Caco-2 (cell line): ENCODE measurements at regions of chr1 and their contacts with region 1.

Region 1: DNA sequence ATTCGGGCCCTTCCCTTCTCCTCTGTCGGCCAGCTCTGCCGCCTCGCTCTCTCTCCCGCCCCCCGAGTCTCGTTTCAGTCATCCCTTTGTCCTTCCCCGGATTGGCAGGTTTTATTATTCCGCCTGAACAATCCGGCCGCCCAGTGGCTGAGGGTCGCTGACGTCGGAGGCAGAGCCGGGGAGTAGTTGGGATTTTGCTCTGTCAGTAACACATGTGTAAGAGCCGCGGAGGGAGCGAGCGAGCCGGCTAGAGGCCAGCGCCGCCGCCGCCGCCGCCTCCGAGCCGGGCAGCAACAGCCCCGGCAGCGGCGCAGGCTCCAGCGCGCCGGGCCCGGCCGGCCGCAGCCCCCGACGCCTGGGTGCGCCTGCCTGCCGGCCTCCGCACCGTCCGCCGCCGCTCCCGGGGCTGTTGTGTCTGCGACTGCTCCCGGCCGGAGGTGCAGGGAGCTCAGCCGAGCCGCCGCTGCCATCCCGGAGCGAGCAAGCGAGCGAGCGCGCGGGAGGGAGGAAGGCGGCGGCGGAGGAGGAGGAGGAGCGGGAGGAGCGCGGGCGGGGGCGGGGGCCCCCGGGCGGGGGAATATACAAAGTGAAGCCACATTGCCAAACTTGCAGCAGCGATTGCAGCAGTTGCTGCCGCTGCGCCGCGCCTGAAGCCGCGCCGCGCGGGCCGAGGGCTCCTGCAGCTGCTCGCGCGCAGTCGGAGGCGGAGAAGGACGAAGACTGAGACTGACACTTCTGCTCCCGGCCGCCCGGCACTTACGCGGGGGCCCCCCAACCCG is at the start of gene LMO4:
- DNase-seq: peak; percentile 92 to 95
- H3K4me3 ChIP-seq: peak within 1 kb of the TSS; percentile 62
- H3K4me3 Mint-ChIP-seq: peak within 1 kb of the TSS; percentile 94
- H3K27ac Mint-ChIP-seq: peak within 1 kb of the TSS; percentile 87
- H3K4me1 ChIP-seq: 0 out of 2 replicates have a peak, but pooled peaks cover 4% of the 10 kb centered on the region
- H3K4me1 Mint-ChIP-seq: no peaks in the 10 kb centered on the region
- H3K27me3 ChIP-seq: no peaks in the 10 kb centered on the region
- H3K27me3 Mint-ChIP-seq: no peaks in the 10 kb centered on the region
- CTCF ChIP-seq: no peak
- total RNA-seq, gene LMO4: 50.4 and 53.8 TPM in 2 replicates

Region 2: GRCh38 chr1:87279966-87280535 is 48.4 kb before region 1 on chr1:
- CTCF ChIA-PET with region 1: interaction called, 10 read pairs
- POLR2A ChIA-PET with region 1: no interaction called
- intact Hi-C with region 1: no loop called
- DNase-seq: no peak
- H3K4me3 ChIP-seq: no peak overlapping the region
- H3K4me3 Mint-ChIP-seq: no peak overlapping the region
- H3K27ac Mint-ChIP-seq: no peak overlapping the region
- H3K4me1 ChIP-seq: no peaks in the 10 kb centered on the region
- H3K4me1 Mint-ChIP-seq: no peaks in the 10 kb centered on the region
- H3K27me3 ChIP-seq: no peaks in the 10 kb centered on the region
- H3K27me3 Mint-ChIP-seq: no peaks in the 10 kb centered on the region
- CTCF ChIP-seq: no peak

Region 3: DNA sequence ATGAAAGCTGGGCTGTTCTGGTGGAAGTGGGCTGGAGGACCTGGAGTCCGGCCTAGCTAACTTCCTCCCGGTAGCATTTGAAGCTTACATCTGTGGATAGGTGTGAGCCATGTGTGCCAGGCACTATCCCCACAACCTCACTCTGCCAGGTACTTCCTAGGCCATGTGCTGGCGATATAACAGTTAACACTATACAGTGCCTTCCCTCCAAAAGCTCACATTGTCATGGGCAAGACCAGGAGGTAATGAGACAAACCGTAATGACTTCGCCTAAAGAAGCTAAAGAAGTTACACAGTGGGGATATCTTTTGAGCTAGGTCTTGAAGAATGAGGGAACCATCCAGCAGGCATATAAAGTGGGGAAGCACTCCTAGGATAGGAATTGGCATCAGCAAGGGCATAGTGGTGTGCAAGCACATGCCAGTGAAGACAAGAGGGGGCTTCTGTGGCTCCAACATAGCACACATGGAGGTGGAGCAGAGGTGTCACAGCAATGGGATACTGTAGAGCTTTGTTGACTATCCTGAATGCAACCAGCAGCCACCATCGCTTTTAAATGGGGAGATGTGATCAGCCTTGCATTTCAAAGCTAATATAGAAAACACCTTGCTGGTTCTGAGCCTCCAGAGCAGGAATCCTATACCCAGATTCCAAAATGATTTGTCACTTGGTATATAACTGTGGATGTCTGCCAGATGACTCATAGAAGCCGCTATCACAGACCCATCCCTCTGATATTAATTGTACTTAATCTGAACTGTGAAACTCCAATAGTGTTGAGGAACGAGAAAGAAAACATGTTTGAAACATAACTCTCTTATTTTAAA is 466.5 kb after region 1 on chr1:
- CTCF ChIA-PET with region 1: interaction called, 3 read pairs
- POLR2A ChIA-PET with region 1: interaction called, 7 read pairs
- intact Hi-C with region 1: loop called (anchors 5 kb)
- DNase-seq: peak; percentile 22 to 35
- H3K4me3 ChIP-seq: no peak overlapping the region
- H3K4me3 Mint-ChIP-seq: no peak overlapping the region
- H3K27ac Mint-ChIP-seq: peak overlapping the region; percentile 77
- H3K4me1 ChIP-seq: peaks cover 76% of the 10 kb centered on the region
- H3K4me1 Mint-ChIP-seq: peaks cover 51% of the 10 kb centered on the region
- H3K27me3 ChIP-seq: no peaks in the 10 kb centered on the region
- H3K27me3 Mint-ChIP-seq: no peaks in the 10 kb centered on the region
- CTCF ChIP-seq: no peak